Activated CD4-positive, alpha-beta T cell treated with anti-CD3 and anti-CD28 coated beads for 36 hours (primary cell): ENCODE measurements at regions of chr14 and their contacts with region 1.

Region 1: GRCh38 chr14:69637503-69638030 is 26.2 kb downstream of the SUSD6 start:
- DNase-seq: peak; percentile 44
- ATAC-seq: peak; percentile 27
- H3K4me3 Mint-ChIP-seq: peak overlapping the region; percentile 52
- H3K27ac Mint-ChIP-seq: peak overlapping the region; percentile 87
- H3K4me1 Mint-ChIP-seq: peaks cover 92% of the 10 kb centered on the region
- H3K27me3 Mint-ChIP-seq: no peaks in the 10 kb centered on the region

Region 2: GRCh38 chr14:69625299-69626131 is 12.1 kb before region 1 on chr14:
- CTCF ChIA-PET with region 1: interaction called, 10 read pairs
- POLR2A ChIA-PET with region 1: interaction called, 7 read pairs
- intact Hi-C with region 1: loop called in 1 of 2 experiments (anchors 1 kb)
- DNase-seq: peak; percentile 89
- ATAC-seq: peak; percentile 81
- H3K4me3 Mint-ChIP-seq: peak overlapping the region; percentile 66
- H3K27ac Mint-ChIP-seq: peak overlapping the region; percentile 96
- H3K4me1 Mint-ChIP-seq: peaks cover 96% of the 10 kb centered on the region
- H3K27me3 Mint-ChIP-seq: no peaks in the 10 kb centered on the region

Region 3: DNA sequence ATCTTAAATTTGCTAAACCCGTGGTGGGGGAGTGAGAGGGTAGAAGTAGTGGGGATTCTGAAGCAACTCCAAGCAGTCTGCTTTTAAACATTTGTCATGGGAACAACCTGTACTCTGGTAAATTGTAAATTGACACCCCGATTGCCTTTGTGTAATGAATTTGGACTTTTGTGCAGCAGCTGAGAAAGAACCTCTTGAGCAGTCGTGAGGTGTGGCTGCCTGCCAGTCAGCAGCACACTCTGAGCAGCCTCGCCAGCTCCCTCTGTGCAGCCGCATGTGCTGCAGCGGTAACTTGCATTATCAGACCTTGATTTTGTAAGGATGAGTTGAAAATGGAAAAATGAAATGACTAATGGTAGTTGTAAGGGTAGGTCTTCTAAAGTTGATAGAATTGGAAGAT is 48.1 kb after region 1 on chr14:
- CTCF ChIA-PET with region 1: interaction called, 5 read pairs
- POLR2A ChIA-PET with region 1: no interaction called
- intact Hi-C with region 1: loop called in 1 of 2 experiments (anchors 1 kb)
- DNase-seq: peak; percentile 78
- ATAC-seq: peak; percentile 74
- H3K4me3 Mint-ChIP-seq: peak overlapping the region; percentile 49
- H3K27ac Mint-ChIP-seq: peak overlapping the region; percentile 94
- H3K4me1 Mint-ChIP-seq: peaks cover 81% of the 10 kb centered on the region
- H3K27me3 Mint-ChIP-seq: no peaks in the 10 kb centered on the region